Activated CD4-positive, alpha-beta T cell treated with anti-CD3 and anti-CD28 coated beads for 36 hours (primary cell): ENCODE measurements at regions of chr1 and their contacts with region 1.

Region 1: GRCh38 chr1:31938174-31938950 is at the start of gene PTP4A2:
- DNase-seq: peak; percentile 93
- ATAC-seq: peak; percentile 63
- H3K4me3 Mint-ChIP-seq: peak within 1 kb of the TSS; percentile 91
- H3K27ac Mint-ChIP-seq: peak within 1 kb of the TSS; percentile 99
- H3K4me1 Mint-ChIP-seq: peaks cover 63% of the 10 kb centered on the region
- H3K27me3 Mint-ChIP-seq: no peaks in the 10 kb centered on the region
- total RNA-seq, gene PTP4A2: 279 to 314 TPM

Region 2: DNA sequence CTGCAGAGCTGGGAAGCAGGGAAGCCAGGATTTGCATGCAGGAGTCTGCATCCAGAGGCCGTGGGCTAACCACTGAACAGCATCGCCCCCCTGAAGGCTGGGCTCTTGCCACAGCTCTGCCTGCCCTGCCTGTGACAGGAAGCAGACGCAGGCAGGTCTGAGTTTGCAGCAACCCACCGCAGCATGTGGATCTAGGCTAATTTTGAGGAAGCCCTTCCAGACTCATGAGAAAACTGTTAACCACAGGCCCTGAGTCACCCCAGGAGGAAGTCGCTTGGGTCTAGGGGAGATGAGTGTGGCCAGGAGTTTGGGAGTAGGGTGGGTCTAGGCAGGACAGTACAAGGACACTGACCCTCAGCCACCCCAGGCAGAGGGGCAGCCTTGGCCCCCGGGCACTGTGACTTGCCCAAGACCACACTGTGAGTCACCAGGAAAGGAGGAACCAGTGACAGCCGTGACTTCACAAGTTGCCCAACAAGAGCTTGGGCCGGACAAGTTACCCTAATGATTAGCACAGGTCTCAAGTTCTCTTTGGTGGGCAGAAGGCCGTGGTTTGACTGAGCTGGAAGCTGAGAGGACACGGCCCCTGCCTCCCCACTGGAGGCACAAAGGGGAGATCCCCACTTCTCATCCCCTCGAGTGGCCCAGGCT is 1181.7 kb before region 1 on chr1:
- CTCF ChIA-PET with region 1: no interaction called
- POLR2A ChIA-PET with region 1: no interaction called
- intact Hi-C with region 1: loop called in 1 of 2 experiments (anchors 10 kb)
- DNase-seq: peak; percentile 84
- ATAC-seq: peak; percentile 54
- H3K4me3 Mint-ChIP-seq: peak overlapping the region; percentile 92
- H3K27ac Mint-ChIP-seq: peak overlapping the region; percentile 99
- H3K4me1 Mint-ChIP-seq: peaks cover 81% of the 10 kb centered on the region
- H3K27me3 Mint-ChIP-seq: no peaks in the 10 kb centered on the region

Region 3: GRCh38 chr1:31815752-31816500 is 122.4 kb before region 1 on chr1 and contains the start of gene SPOCD1:
- CTCF ChIA-PET with region 1: interaction called, 3 read pairs
- POLR2A ChIA-PET with region 1: interaction called, 3 read pairs
- intact Hi-C with region 1: loop called in 1 of 2 experiments (anchors 1 kb)
- DNase-seq: peak; percentile 94
- ATAC-seq: peak; percentile 93
- H3K4me3 Mint-ChIP-seq: no peak within 1 kb of the TSS
- H3K27ac Mint-ChIP-seq: peak within 1 kb of the TSS; percentile 17
- H3K4me1 Mint-ChIP-seq: peaks cover 9% of the 10 kb centered on the region
- H3K27me3 Mint-ChIP-seq: no peaks in the 10 kb centered on the region
- total RNA-seq, gene SPOCD1: 0.79 to 0.91 TPM

Region 4: DNA sequence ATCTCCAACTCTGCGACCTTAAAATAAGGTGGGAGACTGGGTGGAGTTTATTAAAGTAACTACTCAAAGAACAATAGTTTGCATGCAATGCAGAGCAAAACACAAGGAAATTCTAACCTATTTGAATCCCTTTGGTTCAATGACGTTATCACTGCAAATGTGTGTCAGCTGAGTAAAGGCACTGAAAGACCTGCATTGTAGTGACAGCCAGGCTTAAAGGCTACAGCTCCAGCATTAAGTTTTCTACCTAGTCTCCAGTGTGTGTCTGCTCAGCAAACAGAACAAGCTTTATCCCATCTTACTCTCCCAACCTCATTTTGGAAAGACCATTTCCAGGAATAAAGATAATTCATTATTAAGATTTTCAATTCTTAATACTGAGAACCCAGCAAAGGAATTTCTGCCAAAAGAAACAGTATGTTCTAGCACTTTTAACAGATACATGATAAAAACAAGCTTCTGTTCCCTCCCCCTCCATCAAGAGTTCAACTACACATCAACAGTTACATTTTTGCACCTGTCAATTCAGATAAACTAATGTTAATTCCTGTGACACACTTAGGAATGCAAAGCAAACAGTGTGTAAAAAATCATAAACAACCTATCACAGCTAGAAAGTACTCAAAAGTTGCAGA is 14.3 kb before region 1 on chr1:
- CTCF ChIA-PET with region 1: interaction called, 11 read pairs
- POLR2A ChIA-PET with region 1: interaction called, 9 read pairs
- intact Hi-C with region 1: loop called in 1 of 2 experiments (anchors 1 kb)
- DNase-seq: no peak
- ATAC-seq: no peak
- H3K4me3 Mint-ChIP-seq: no peak overlapping the region
- H3K27ac Mint-ChIP-seq: peak overlapping the region; percentile 73
- H3K4me1 Mint-ChIP-seq: peaks cover 86% of the 10 kb centered on the region
- H3K27me3 Mint-ChIP-seq: no peaks in the 10 kb centered on the region

Region 5: DNA sequence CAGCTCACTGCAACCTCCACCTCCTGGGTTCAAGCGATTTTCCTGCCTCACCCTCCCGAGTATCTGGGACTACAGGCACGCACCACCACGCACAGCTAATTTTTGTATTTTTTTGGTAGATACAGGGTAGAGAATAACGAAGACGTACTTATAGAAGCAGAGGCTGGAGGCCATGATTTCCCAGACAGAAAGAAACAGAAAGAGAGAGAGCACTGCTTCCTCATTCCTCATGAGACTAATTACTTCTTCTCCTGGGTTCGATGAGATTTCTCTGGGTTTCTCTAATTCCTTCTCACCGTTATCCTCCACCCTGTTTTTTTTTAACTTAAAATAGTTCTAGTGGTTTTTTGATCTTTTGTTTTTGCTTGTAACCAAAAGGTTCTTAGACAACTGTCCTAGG is 23.2 kb after region 1 on chr1:
- CTCF ChIA-PET with region 1: interaction called, 175 read pairs
- POLR2A ChIA-PET with region 1: interaction called, 41 read pairs
- intact Hi-C with region 1: loop called (anchors 1 kb)
- DNase-seq: no peak
- ATAC-seq: no peak
- H3K4me3 Mint-ChIP-seq: no peak overlapping the region
- H3K27ac Mint-ChIP-seq: peak overlapping the region; percentile 81
- H3K4me1 Mint-ChIP-seq: peaks cover 67% of the 10 kb centered on the region
- H3K27me3 Mint-ChIP-seq: no peaks in the 10 kb centered on the region